Heart right ventricle (tissue), 16 donors: ENCODE measurements at regions of chr11 and their contacts with region 1.

Region 1: DNA sequence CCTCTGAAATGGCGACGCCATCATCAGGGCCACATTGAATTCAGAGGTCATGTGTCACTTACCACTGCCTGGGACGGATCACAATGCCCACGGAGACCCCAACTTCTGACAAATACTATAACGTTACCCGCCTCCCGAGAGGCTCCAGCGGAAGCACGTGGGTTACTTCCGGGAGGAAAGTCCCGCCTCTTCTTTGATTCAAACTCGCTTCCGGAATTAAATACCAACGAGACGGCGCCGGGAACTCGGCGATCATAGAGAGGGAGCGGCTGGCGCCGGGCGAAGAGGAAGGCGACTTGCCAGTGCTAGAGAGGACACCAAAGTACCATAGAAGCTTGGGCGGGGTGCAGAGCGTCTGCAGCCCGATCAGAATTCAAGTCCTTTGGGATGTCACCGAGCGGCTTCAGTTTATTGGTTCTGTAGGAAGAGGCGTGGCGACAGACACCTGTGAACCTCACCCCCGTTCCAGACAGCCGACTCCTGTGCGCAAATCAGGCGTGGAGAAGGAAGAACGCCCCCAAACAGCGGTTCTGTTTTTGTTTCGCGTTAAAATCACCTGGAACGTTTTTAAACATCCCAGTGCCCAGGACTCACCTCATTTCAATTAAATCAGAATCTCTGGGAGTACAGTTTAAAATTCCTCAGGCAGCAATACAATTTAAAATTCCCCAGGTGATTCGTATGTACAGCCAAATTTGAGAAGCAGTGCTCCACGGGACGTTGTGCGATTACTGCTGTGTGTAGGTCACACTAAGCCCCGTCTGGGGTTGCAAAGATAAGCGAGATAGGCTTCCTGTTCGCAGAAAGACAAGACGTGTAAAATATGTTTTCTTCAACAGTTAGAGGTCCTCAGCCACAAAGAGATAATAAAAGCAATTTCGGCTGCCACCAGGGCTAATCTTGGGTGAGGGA is at the start of gene TIMM10:
- DNase-seq: peak; percentile 93 to 95
- ATAC-seq: peak; percentile 97 to 99 (median 98)
- H3K4me3 ChIP-seq: peak within 1 kb of the TSS; percentile 51 to 90 (median 74)
- H3K27ac ChIP-seq: peak within 1 kb of the TSS in 9 of 10 donors; percentile 30 to 86 (median 76)
- H3K4me1 ChIP-seq: peaks cover 0 to 23% (median 13%) of the 10 kb centered on the region in 9 donors
- H3K27me3 ChIP-seq: no peaks in the 10 kb centered on the region
- CTCF ChIP-seq: no peak
- total RNA-seq, gene TIMM10: 38.0 to 76.6 (median 51.5) TPM

Region 2: GRCh38 chr11:57324886-57325734 is 205.7 kb before region 1 on chr11 and contains the start of gene TNKS1BP1:
- intact Hi-C with region 1: no loop called
- DNase-seq: peak; percentile 96 to 98
- ATAC-seq: peak; percentile 85 to 92 (median 88)
- H3K4me3 ChIP-seq: peak within 1 kb of the TSS; percentile 65 to 80 (median 71)
- H3K27ac ChIP-seq: peak within 1 kb of the TSS; percentile 86 to 96 (median 92)
- H3K4me1 ChIP-seq: peaks cover 8 to 62% (median 49%) of the 10 kb centered on the region in 9 donors
- H3K27me3 ChIP-seq: no peaks in the 10 kb centered on the region
- CTCF ChIP-seq: no peak
- total RNA-seq, gene TNKS1BP1: 19.9 to 53.8 (median 34.3) TPM

Region 3: GRCh38 chr11:57493507-57494503 is 37.0 kb before region 1 on chr11:
- intact Hi-C with region 1: loop called (anchors 1 to 5 kb)
- DNase-seq: peak in 1 of 2 donors; percentile 64
- ATAC-seq: peak in 7 of 8 donors; percentile 53 to 80 (median 64)
- H3K4me3 ChIP-seq: no peak overlapping the region
- H3K27ac ChIP-seq: no peak overlapping the region
- H3K4me1 ChIP-seq: peaks cover 0 to 8% (median 4%) of the 10 kb centered on the region in 9 donors
- H3K27me3 ChIP-seq: no peaks in the 10 kb centered on the region
- CTCF ChIP-seq: peak; percentile 86 to 93 (median 90)

Region 4: DNA sequence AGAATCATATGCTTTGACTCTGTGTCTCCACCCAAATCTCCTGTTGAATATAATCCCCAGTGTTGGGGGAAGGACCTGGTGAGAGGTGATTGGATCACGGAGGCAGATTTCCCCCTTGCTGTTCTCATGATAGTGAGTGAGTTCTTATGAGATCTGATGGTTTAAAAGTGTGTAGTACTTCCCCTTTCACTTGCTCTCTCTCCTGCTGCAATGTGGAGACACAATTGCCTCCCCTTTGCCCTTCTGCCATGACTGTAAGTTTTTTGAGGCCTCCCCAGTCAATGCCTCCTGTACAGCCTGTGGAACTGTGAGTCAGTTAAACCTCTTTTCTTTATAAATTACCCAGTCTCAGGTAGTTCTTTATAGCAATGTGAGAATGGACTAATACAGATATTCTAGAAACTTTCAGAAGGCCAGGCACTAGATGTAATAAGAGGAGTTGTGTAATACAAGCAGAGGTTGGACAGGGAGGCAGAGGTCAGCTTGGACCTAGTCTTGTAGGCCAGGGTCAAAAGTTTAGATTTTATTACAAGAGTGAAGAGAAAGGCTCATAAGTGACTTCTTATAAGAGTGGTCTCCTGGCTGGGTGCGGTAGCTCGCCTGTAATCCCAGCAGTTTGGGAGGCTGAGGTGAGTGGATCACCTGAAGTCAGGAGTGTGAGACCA is 57.3 kb after region 1 on chr11:
- intact Hi-C with region 1: no loop called
- DNase-seq: no peak
- ATAC-seq: no peak
- H3K4me3 ChIP-seq: no peak overlapping the region
- H3K27ac ChIP-seq: no peak overlapping the region
- H3K4me1 ChIP-seq: no peaks in the 10 kb centered on the region
- H3K27me3 ChIP-seq: no peaks in the 10 kb centered on the region
- CTCF ChIP-seq: no peak